HCT116 (cell line): ENCODE measurements at regions of chr1 and their contacts with region 1.

Region 1: DNA sequence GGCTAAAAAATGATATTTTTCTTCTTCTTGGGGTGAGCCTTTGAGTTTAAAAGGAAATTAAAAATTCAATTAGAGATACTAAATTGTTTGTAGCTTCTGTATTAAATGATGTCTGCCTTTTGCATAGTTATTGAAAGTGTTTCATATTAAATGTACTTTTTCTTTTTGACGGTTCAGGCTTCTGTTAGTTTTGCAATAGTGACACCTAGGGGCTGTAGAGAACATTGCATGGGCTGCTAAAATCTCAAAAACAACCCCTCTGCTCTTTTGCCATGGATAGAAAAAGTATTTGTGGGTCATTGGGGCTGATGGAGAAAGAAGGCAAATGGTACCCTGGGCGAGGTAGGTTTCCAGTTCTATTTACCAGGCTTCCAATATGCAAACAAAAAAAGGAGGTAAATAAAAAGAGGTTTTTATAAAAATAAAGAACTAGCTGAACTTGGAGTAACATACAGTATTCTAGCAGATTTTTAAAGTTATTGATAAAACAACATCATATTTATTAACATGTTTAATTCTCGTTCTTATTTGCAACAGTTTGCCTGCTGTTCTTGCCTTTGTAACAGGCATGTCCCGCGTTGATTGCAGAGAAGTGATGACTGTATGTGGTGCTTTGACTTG is 115.4 kb upstream of the HOOK1 start:
- DNase-seq: peak; percentile 15
- ATAC-seq: no peak
- H3K4me3 ChIP-seq: no peak overlapping the region
- H3K27ac ChIP-seq: no peak overlapping the region
- H3K4me1 ChIP-seq: no peaks in the 10 kb centered on the region
- H3K27me3 ChIP-seq: no peaks in the 10 kb centered on the region
- CTCF ChIP-seq: peak; percentile 67 to 93 (median 89); a peak in 5 of 6 replicates
- POLR2A ChIP-seq: no peak
- RAD21 ChIP-seq: peak; percentile 93

Region 2: DNA sequence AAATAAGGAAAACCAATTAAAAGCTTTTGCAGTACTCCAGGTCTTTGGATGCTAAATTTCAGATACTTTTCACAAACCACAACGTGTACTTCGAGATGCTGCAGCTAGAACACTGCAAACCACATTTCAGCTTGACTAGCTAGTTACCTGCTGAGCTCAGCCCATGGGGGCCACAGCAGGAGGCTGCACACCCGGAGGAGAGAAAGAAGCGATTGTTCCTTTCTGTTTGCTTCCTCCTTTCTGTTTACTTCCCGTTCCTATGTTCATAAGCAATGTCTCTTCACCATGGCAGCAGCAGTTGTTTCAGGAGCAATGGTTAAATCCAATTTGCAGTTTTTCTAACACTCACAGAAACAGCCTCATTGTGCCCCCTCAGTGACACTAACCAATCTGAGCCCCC is 628.0 kb before region 1 on chr1:
- CTCF ChIA-PET with region 1: no interaction called
- POLR2A ChIA-PET with region 1: no interaction called
- RAD21 ChIA-PET with region 1: no interaction called
- intact Hi-C with region 1: loop called (anchors 5 kb)
- DNase-seq: no peak
- ATAC-seq: no peak
- H3K4me3 ChIP-seq: no peak overlapping the region
- H3K27ac ChIP-seq: no peak overlapping the region
- H3K4me1 ChIP-seq: no peaks in the 10 kb centered on the region
- H3K27me3 ChIP-seq: no peaks in the 10 kb centered on the region
- CTCF ChIP-seq: no peak
- POLR2A ChIP-seq: no peak
- RAD21 ChIP-seq: no peak

Region 3: GRCh38 chr1:59150577-59151391 is 548.6 kb before region 1 on chr1:
- CTCF ChIA-PET with region 1: no interaction called
- POLR2A ChIA-PET with region 1: no interaction called
- RAD21 ChIA-PET with region 1: no interaction called
- intact Hi-C with region 1: loop called (anchors 5 kb)
- DNase-seq: peak; percentile 56
- ATAC-seq: peak; percentile 82
- H3K4me3 ChIP-seq: peak overlapping the region; percentile 20 to 51
- H3K27ac ChIP-seq: no peak overlapping the region
- H3K4me1 ChIP-seq: peaks cover 10 to 34% of the 10 kb centered on the region in 2 experiments; a peak in 3 of 4 replicates
- H3K27me3 ChIP-seq: no peaks in the 10 kb centered on the region
- CTCF ChIP-seq: no peak
- POLR2A ChIP-seq: no peak
- RAD21 ChIP-seq: peak; percentile 20